Naive thymus-derived CD4-positive, alpha-beta T cell (primary cell): ENCODE measurements at regions of chr3 and their contacts with region 1.

Region 1: DNA sequence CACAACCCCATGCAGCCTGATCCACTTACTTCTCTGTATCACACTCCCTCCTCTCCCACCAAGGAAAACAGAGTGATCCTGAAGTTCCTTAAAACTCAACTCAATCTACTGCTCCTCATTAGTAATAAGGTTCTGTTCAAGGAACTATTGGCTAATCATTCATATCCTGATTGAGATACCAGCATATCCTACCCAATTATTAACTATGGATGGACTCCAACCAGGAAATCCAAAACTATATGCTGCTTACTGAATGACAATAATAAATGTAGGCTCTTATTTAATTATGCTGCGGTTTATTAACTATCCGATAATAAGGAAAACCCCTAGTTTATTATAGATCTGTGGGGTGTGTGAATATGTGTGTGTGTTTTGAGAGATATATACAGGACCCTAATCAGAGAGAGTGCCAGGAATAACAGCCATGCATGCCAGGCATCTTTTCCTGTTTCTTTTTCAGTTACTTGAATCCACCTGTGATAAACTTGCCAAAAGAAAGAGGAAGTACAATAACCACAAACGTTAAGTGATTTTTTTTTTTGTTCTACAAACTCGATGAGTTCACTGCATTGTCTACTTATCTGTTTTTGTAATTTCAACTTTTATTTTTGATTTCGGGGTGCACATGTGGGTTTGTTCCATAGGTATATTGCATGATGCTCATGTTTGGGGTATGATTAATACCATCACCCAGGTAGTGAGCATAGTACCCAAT is 1031.7 kb upstream of the CFAP20DC start:
- DNase-seq: peak in 7 of 9 donors; percentile 27 to 70 (median 62)
- ATAC-seq: peak; percentile 46
- H3K4me3 ChIP-seq: peak overlapping the region; percentile 54
- H3K4me3 Mint-ChIP-seq: peak overlapping the region; percentile 76 to 97 (median 92)
- H3K27ac ChIP-seq: peak overlapping the region; percentile 86
- H3K27ac Mint-ChIP-seq: peak overlapping the region; percentile 89 to 98 (median 94)
- H3K4me1 ChIP-seq: peaks cover 21 to 23% of the 10 kb centered on the region in 2 donors
- H3K4me1 Mint-ChIP-seq: peaks cover 17 to 64% (median 53%) of the 10 kb centered on the region in 7 donors
- H3K27me3 ChIP-seq: no peaks in the 10 kb centered on the region
- H3K27me3 Mint-ChIP-seq: no peaks in the 10 kb centered on the region

Region 2: GRCh38 chr3:59212128-59212779 is 869.3 kb before region 1 on chr3:
- CTCF ChIA-PET with region 1: no interaction called
- POLR2A ChIA-PET with region 1: no interaction called
- intact Hi-C with region 1: loop called in 1 of 2 experiments (anchors 2 kb)
- DNase-seq: peak in 7 of 9 donors; percentile 11 to 60 (median 53)
- ATAC-seq: peak; percentile 83
- H3K4me3 ChIP-seq: no peak overlapping the region
- H3K4me3 Mint-ChIP-seq: no peak overlapping the region
- H3K27ac ChIP-seq: no peak overlapping the region
- H3K27ac Mint-ChIP-seq: no peak overlapping the region
- H3K4me1 ChIP-seq: no peaks in the 10 kb centered on the region
- H3K4me1 Mint-ChIP-seq: peaks cover 0 to 10% (median 5%) of the 10 kb centered on the region in 7 donors
- H3K27me3 ChIP-seq: no peaks in the 10 kb centered on the region
- H3K27me3 Mint-ChIP-seq: peaks cover 0 to 11% (median 8%) of the 10 kb centered on the region in 5 donors

Region 3: GRCh38 chr3:59575113-59576001 is 506.2 kb before region 1 on chr3:
- CTCF ChIA-PET with region 1: no interaction called
- POLR2A ChIA-PET with region 1: interaction called, 4 read pairs
- intact Hi-C with region 1: loop called (anchors 1 to 5 kb)
- DNase-seq: peak; percentile 68 to 92 (median 82)
- ATAC-seq: peak; percentile 86
- H3K4me3 ChIP-seq: no peak overlapping the region
- H3K4me3 Mint-ChIP-seq: peak overlapping the region in 1 of 10 donors; percentile 37
- H3K27ac ChIP-seq: no peak overlapping the region
- H3K27ac Mint-ChIP-seq: peak overlapping the region in 1 of 9 donors; percentile 65
- H3K4me1 ChIP-seq: peaks cover 0 to 3% of the 10 kb centered on the region in 2 donors
- H3K4me1 Mint-ChIP-seq: peaks cover 3 to 20% (median 11%) of the 10 kb centered on the region in 7 donors
- H3K27me3 ChIP-seq: no peaks in the 10 kb centered on the region
- H3K27me3 Mint-ChIP-seq: peaks cover 0 to 2% (median 0%) of the 10 kb centered on the region in 5 donors

Region 4: GRCh38 chr3:59919586-59919985 is 162.0 kb before region 1 on chr3:
- CTCF ChIA-PET with region 1: no interaction called
- POLR2A ChIA-PET with region 1: no interaction called
- intact Hi-C with region 1: no loop called
- DNase-seq: no peak
- ATAC-seq: no peak
- H3K4me3 ChIP-seq: no peak overlapping the region
- H3K4me3 Mint-ChIP-seq: peak overlapping the region; percentile 26 to 74 (median 66)
- H3K27ac ChIP-seq: no peak overlapping the region
- H3K27ac Mint-ChIP-seq: peak overlapping the region in 8 of 9 donors; percentile 12 to 80 (median 75)
- H3K4me1 ChIP-seq: peaks cover 0 to 51% of the 10 kb centered on the region in 2 donors
- H3K4me1 Mint-ChIP-seq: peaks cover 39 to 98% (median 88%) of the 10 kb centered on the region in 7 donors
- H3K27me3 ChIP-seq: no peaks in the 10 kb centered on the region
- H3K27me3 Mint-ChIP-seq: no peaks in the 10 kb centered on the region

Region 5: GRCh38 chr3:59963676-59964075 is 117.9 kb before region 1 on chr3:
- CTCF ChIA-PET with region 1: no interaction called
- POLR2A ChIA-PET with region 1: no interaction called
- intact Hi-C with region 1: no loop called
- DNase-seq: no peak
- ATAC-seq: no peak
- H3K4me3 ChIP-seq: no peak overlapping the region
- H3K4me3 Mint-ChIP-seq: no peak overlapping the region
- H3K27ac ChIP-seq: no peak overlapping the region
- H3K27ac Mint-ChIP-seq: no peak overlapping the region
- H3K4me1 ChIP-seq: peaks cover 0 to 7% of the 10 kb centered on the region in 2 donors
- H3K4me1 Mint-ChIP-seq: peaks cover 13 to 87% (median 59%) of the 10 kb centered on the region in 7 donors
- H3K27me3 ChIP-seq: no peaks in the 10 kb centered on the region
- H3K27me3 Mint-ChIP-seq: no peaks in the 10 kb centered on the region

Region 6: GRCh38 chr3:60010781-60011180 is 70.8 kb before region 1 on chr3:
- CTCF ChIA-PET with region 1: interaction called, 6 read pairs
- POLR2A ChIA-PET with region 1: interaction called, 295 read pairs
- intact Hi-C with region 1: loop called (anchors 1 kb)
- DNase-seq: peak; percentile 17 to 93 (median 88)
- ATAC-seq: peak; percentile 98
- H3K4me3 ChIP-seq: peak overlapping the region; percentile 47
- H3K4me3 Mint-ChIP-seq: peak overlapping the region; percentile 78 to 97 (median 84)
- H3K27ac ChIP-seq: peak overlapping the region; percentile 77
- H3K27ac Mint-ChIP-seq: peak overlapping the region; percentile 91 to 100 (median 95)
- H3K4me1 ChIP-seq: peaks cover 57 to 91% of the 10 kb centered on the region in 2 donors
- H3K4me1 Mint-ChIP-seq: peaks cover 29 to 100% (median 91%) of the 10 kb centered on the region in 7 donors
- H3K27me3 ChIP-seq: no peaks in the 10 kb centered on the region
- H3K27me3 Mint-ChIP-seq: no peaks in the 10 kb centered on the region

Region 7: GRCh38 chr3:60053526-60054265 is 27.8 kb before region 1 on chr3:
- CTCF ChIA-PET with region 1: interaction called, 3 read pairs
- POLR2A ChIA-PET with region 1: interaction called, 213 read pairs
- intact Hi-C with region 1: loop called in 1 of 2 experiments (anchors 1 kb)
- DNase-seq: peak in 1 of 9 donors; percentile 55
- ATAC-seq: no peak
- H3K4me3 ChIP-seq: no peak overlapping the region
- H3K4me3 Mint-ChIP-seq: peak overlapping the region; percentile 7 to 78 (median 51)
- H3K27ac ChIP-seq: peak overlapping the region; percentile 5
- H3K27ac Mint-ChIP-seq: peak overlapping the region; percentile 77 to 99 (median 90)
- H3K4me1 ChIP-seq: peaks cover 3 to 73% of the 10 kb centered on the region in 2 donors
- H3K4me1 Mint-ChIP-seq: peaks cover 36 to 95% (median 92%) of the 10 kb centered on the region in 7 donors
- H3K27me3 ChIP-seq: no peaks in the 10 kb centered on the region
- H3K27me3 Mint-ChIP-seq: no peaks in the 10 kb centered on the region

Region 8: DNA sequence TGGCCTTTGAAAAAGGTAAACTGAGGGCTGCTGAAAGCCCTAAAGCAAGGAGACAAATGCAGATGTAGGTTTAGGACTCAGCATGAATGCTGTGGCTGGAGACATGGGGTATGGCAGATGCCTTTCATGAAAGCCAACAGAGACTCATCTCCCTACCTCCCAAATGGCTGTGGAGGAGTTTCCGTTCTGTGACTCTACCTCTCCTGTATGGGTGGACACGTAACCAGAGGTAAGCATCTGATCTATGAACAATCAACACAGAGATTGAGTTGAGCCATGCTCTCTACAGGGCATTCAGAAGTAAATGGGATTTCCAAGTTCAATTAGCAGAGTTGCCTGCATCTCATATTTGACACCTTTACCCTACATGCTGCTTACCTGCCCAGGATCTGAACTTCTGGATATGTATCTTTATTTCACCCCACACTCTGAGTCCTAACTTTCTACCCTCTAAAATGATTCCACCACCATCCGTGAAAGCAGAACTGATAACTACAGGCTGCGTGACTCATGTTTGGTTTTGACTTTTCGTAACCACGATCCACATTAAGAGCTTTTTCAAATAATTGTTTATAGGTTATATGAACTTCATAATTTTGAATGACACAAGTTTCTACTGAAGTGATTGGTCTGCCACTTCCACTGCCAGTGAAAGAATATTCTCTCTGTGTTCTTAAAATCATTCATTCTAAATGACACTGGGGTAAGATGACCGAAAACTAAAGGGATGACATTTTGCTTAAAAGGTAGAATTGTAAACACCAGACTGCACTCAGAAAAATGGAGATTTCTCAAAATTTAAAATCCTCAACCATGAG is 111.0 kb after region 1 on chr3:
- CTCF ChIA-PET with region 1: no interaction called
- POLR2A ChIA-PET with region 1: no interaction called
- intact Hi-C with region 1: loop called in 1 of 2 experiments (anchors 5 kb)
- DNase-seq: peak in 1 of 9 donors; percentile 25
- ATAC-seq: no peak
- H3K4me3 ChIP-seq: no peak overlapping the region
- H3K4me3 Mint-ChIP-seq: peak overlapping the region in 1 of 10 donors; percentile 45
- H3K27ac ChIP-seq: no peak overlapping the region
- H3K27ac Mint-ChIP-seq: peak overlapping the region in 1 of 9 donors; percentile 80
- H3K4me1 ChIP-seq: no peaks in the 10 kb centered on the region
- H3K4me1 Mint-ChIP-seq: peaks cover 0 to 41% (median 7%) of the 10 kb centered on the region in 7 donors
- H3K27me3 ChIP-seq: no peaks in the 10 kb centered on the region
- H3K27me3 Mint-ChIP-seq: no peaks in the 10 kb centered on the region

Region 9: DNA sequence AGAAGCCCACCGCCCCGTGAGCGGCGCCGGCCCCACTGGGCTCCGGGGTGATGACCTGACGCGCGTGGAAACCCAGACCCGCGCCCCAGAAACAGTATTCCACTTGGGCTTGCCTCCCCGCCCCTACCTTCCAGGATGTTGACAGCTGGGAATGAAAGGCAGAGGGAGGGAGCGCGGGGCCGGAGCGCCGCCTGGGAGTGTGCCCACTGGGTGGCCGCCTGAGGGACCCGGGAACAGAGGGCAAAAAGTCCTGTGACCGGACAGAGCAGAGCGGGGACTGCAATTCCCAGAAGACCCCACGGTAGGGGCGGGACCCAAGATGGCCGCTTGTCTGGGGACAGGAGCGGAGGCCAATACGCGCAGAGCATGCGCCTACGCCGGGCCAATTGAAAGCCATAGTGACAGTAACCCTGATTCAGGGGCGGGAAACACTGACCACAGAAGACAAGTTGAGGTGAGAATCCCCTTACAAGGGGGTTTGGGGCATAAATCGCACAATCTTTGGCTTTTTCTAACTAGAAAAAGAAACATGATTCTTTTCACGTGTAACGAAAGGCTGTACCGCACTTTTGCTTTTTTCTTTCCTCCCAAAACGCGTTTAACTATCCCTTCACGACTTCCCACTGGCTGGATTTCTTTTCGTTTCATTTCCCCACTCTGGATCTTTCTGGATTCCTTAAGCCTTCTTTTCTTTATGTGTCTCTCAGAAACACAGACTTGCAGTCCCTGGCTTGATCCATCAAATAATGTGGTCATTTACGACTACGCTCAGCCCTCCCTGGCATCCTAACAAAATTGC is 1169.8 kb after region 1 on chr3 and contains the start of gene FHIT:
- CTCF ChIA-PET with region 1: no interaction called
- POLR2A ChIA-PET with region 1: no interaction called
- intact Hi-C with region 1: loop called (anchors 2 to 10 kb)
- DNase-seq: peak; percentile 73 to 89 (median 87)
- ATAC-seq: peak; percentile 96
- H3K4me3 ChIP-seq: peak within 1 kb of the TSS; percentile 83
- H3K4me3 Mint-ChIP-seq: peak within 1 kb of the TSS; percentile 83 to 94 (median 92)
- H3K27ac ChIP-seq: peak within 1 kb of the TSS; percentile 80
- H3K27ac Mint-ChIP-seq: peak within 1 kb of the TSS; percentile 74 to 95 (median 84)
- H3K4me1 ChIP-seq: peaks cover 11 to 13% of the 10 kb centered on the region in 2 donors
- H3K4me1 Mint-ChIP-seq: peaks cover 10 to 27% (median 25%) of the 10 kb centered on the region in 7 donors
- H3K27me3 ChIP-seq: no peaks in the 10 kb centered on the region
- H3K27me3 Mint-ChIP-seq: peaks cover 0 to 12% (median 1%) of the 10 kb centered on the region in 5 donors
- total RNA-seq, gene FHIT: 53.4 to 230 (median 191) TPM